Heart left ventricle (tissue), 16 donors: ENCODE measurements at regions of chr16 and their contacts with region 1.

Region 1: DNA sequence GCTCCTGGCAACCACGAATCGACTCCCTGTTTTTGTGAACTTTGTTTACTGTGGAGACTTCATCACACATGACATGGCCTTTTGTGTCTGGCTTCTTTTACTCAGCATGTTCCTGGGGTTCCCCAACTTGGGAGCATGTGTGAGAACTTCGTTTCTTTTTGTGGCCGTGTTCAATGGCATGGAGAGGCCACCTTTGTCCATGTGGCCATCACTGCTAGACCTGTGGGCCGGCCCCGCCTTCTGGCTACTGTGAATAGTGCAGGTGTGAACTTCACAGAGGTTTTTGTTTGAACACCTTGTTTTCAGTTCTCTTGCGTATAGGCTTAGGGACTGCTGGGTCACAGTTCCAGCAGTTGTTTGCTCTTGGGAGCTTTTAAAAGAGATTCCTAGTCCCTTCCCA is 5.7 kb upstream of the SLC38A8 start:
- DNase-seq: peak in 1 of 5 donors; percentile 37
- ATAC-seq: no peak
- H3K4me3 ChIP-seq: no peak overlapping the region
- H3K27ac ChIP-seq: no peak overlapping the region
- H3K4me1 ChIP-seq: peaks cover 0 to 17% (median 2%) of the 10 kb centered on the region in 12 donors
- H3K27me3 ChIP-seq: peaks cover 0 to 7% (median 0%) of the 10 kb centered on the region in 9 donors
- CTCF ChIP-seq: no peak
- POLR2A ChIP-seq: no peak

Region 2: GRCh38 chr16:84007965-84008364 is 40.3 kb before region 1 on chr16:
- intact Hi-C with region 1: loop called in 1 of 10 experiments (anchors 5 kb)
- DNase-seq: peak in 4 of 5 donors; percentile 24 to 57 (median 49)
- ATAC-seq: peak; percentile 54 to 79 (median 62)
- H3K4me3 ChIP-seq: no peak overlapping the region
- H3K27ac ChIP-seq: no peak overlapping the region
- H3K4me1 ChIP-seq: no peaks in the 10 kb centered on the region
- H3K27me3 ChIP-seq: peaks cover 0 to 7% (median 0%) of the 10 kb centered on the region in 9 donors
- CTCF ChIP-seq: no peak
- POLR2A ChIP-seq: no peak